BJ (cell line): ENCODE measurements at regions of chr12 and their contacts with region 1.

Region 1: GRCh38 chr12:53213348-53213747 is 6.3 kb upstream of the ITGB7 start:
- DNase-seq: no peak
- H3K4me3 ChIP-seq: no peak overlapping the region
- H3K27me3 ChIP-seq: no peaks in the 10 kb centered on the region
- CTCF ChIP-seq: peak; percentile 92

Region 2: GRCh38 chr12:53159195-53159839 is 54.0 kb before region 1 on chr12:
- CTCF ChIA-PET with region 1: interaction called, 12 read pairs
- POLR2A ChIA-PET with region 1: no interaction called
- DNase-seq: no peak
- H3K4me3 ChIP-seq: no peak overlapping the region
- H3K27me3 ChIP-seq: no peaks in the 10 kb centered on the region
- CTCF ChIP-seq: peak; percentile 100

Region 3: GRCh38 chr12:53223389-53224060 is 10.2 kb after region 1 on chr12:
- CTCF ChIA-PET with region 1: interaction called, 6 read pairs
- POLR2A ChIA-PET with region 1: interaction called, 11 read pairs
- DNase-seq: no peak
- H3K4me3 ChIP-seq: no peak overlapping the region
- H3K27me3 ChIP-seq: no peaks in the 10 kb centered on the region
- CTCF ChIP-seq: no peak

Region 4: DNA sequence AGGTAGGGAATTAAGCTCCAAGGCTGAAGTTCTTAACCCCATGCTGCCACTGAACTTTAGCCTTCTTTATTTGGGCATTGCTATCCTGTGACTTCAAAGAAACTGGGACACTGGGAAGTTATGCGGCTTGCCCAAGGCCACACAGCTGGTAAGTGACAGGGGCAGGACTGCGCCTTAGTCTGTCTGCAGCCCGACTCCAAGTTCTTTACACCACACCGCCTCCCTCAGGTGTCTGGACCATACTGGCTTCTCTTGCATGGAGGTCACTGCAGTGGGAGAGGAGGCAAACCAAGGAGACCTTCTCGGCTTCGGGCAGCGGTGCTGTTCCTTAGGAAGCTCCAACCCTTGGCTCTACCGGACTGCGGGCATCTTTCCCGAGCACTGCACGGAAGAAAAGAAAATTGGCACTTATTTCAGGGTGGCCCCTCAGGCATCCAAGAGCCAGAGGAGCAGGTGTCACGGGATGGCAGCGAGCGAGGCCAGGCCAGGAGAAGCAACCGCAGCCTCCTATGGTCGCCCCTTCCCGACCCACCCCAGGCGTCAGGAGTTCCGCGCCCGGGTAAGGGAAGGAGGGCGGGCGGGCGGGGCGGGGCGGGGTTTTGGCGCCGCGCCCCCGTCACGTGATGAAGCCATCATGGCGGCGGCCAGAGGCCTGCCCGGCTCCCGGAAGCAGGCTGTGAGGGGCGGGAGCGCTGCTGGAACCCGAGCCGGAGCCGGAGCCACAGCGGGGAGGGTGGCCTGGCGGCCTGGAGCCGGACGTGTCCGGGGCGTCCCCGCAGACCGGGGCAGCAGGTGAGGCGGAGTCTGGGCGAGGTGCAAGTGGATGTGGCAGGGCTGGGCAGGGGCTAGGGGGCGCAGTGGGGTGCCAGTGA is 38.4 kb after region 1 on chr12:
- CTCF ChIA-PET with region 1: interaction called, 40 read pairs
- POLR2A ChIA-PET with region 1: no interaction called
- DNase-seq: no peak
- H3K4me3 ChIP-seq: peak overlapping the region; percentile 83
- H3K27me3 ChIP-seq: no peaks in the 10 kb centered on the region
- CTCF ChIP-seq: peak; percentile 47

Region 5: DNA sequence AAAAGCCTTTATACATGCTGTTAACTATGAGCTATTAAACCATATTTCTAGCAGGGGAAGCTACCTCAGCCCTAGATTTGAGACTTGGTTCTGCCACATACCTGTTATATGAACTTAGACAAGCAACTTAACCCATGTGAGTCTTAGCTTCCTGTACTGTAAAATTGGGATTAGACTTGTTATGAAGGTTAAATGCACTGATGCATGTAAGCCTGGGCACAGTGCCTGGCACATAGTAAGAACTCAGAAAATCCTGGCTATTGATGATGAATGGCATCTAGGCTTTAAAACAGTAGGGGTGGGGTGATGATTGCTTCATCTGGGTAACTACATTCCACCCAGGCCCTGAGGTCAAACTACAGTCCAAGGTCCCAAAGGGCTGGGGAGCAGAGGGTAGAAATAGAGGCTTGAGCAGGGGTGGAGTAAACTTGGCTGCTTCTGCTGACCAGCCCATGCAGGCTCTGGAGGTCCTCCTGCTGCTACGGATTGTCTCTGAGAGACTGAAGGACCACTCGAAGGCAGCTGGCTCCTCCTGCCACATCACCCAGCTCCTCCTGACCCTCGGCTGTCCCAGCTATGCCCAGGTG is 66.0 kb after region 1 on chr12:
- CTCF ChIA-PET with region 1: interaction called, 240 read pairs
- POLR2A ChIA-PET with region 1: no interaction called
- DNase-seq: no peak
- H3K4me3 ChIP-seq: no peak overlapping the region
- H3K27me3 ChIP-seq: no peaks in the 10 kb centered on the region
- CTCF ChIP-seq: no peak

Region 6: DNA sequence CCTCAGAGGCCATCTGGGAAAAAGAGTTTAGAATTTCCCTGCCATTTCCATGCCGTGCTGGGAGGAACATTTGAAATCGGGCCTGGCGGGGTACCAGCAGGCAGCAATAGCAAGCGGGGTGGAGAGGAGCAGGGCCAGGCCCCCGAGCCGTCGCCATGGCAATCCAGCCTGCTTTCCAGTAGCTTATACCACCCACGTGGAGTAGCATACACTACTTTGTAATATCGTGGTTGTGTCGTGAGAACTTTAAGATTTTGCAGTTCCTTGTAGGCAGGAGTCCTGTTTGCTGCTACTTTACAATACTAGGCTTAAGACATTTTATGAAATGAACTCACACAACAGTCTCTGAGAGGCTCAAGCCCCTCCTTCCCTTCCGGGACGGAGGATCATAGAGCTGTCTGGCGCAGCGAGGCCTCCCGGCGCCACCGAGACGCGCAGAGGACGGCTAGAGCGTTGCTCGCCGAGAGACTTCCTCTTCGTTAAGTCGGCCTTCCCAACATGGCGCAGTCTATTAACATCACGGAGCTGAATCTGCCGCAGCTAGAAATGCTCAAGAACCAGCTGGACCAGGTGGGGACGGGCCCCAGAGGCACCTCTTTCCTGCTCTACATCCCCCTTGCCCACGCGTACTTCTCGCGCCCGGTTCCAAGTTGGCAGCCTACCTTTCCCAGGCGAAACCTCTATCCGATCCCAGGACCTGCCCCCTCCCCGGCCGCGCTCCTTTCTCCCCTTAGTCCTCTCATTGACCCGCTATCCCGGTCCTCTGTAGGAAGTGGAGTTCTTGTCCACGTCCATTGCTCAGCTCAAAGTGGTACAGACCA is 81.9 kb after region 1 on chr12 and contains the start of gene PFDN5:
- CTCF ChIA-PET with region 1: interaction called, 240 read pairs
- POLR2A ChIA-PET with region 1: interaction called, 6 read pairs
- DNase-seq: peak; percentile 81
- H3K4me3 ChIP-seq: peak within 1 kb of the TSS; percentile 69
- H3K27me3 ChIP-seq: no peaks in the 10 kb centered on the region
- CTCF ChIP-seq: peak; percentile 17; the same call in 1 of the 2 replicates
- polyA plus RNA-seq, gene PFDN5: 965 and 1,130 TPM in 2 replicates

Region 7: GRCh38 chr12:53344824-53345485 is 131.6 kb after region 1 on chr12:
- CTCF ChIA-PET with region 1: interaction called, 15 read pairs
- POLR2A ChIA-PET with region 1: no interaction called
- DNase-seq: no peak
- H3K4me3 ChIP-seq: peak overlapping the region; percentile 66
- H3K27me3 ChIP-seq: no peaks in the 10 kb centered on the region; the same call in 1 of the 2 replicates
- CTCF ChIP-seq: peak; percentile 93